ENCODE measurements at regions of chr6 and their contacts with region 1.

Region 1: DNA sequence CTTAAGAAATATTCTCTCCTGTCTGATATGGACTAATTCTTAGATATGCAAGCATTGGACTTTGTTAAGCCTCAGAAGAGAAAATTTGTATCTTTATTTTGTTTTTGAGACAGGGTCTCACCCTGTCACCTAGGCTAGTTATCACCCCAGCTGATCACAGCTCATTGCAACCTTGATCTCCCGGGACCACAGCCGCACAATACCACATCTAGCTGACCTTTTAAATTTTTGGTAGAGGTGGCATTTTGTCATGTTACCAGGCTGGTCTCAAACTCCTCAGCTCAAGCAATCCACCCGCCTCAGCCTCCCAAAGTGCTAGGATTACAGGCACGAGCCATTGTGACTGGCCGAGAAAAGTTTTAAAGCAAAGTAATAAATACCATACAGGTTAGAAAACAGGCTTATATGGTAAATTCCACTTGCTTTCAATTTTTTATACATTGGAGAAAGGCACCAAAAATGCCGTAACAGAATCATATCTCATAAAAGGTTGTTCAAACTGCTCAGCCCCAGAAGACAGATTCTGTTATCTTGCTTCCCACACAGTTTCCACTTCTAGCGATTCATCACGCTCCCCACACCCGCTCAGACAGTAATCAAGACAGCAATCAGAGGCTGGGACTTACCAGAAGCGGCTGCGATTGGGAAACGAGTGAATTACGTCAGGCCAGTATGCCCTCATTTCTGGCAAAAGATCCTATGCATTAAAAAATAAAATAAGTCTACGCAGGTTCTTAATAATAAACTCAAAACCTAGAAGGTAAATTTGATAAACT is 13.8 kb downstream of the RNASET2 start:
- DNase-seq: peak; percentile 55
- H3K4me3 Mint-ChIP-seq: peak overlapping the region; percentile 50
- H3K27ac Mint-ChIP-seq: peak overlapping the region; percentile 90
- H3K4me1 Mint-ChIP-seq: peaks cover 45% of the 10 kb centered on the region
- H3K27me3 Mint-ChIP-seq: no peaks in the 10 kb centered on the region

Region 2: DNA sequence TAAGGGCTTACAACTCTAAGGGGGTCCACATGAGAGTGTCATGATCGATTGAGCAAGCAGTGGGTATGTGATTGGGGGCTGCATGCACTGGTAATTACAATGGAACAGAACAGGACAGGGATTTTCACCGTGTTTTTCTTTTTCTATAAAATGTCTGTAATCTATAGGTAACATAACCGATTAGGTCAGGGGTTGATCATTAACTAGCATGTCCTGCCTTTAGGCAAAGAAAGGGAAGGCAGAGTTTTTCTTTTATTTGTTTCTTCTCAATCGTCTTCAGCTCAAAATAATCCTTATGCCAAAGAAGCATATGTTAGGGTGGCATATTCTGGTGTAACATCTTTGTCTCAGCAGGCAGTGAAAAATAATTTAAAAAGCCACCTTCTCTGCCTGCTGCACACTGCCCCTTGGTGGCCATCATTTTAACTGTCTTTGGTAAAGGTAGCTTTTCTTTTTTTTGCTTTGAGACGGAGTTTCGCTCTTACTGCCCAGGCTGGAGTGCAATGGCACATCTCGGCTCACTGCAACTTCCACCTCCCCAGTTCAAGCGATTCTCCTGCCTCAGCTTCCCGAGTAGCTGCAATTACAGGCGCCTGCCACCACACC is 46.9 kb after region 1 on chr6:
- intact Hi-C with region 1: loop called (anchors 1 kb)
- DNase-seq: peak; percentile 39
- H3K4me3 Mint-ChIP-seq: no peak overlapping the region
- H3K27ac Mint-ChIP-seq: no peak overlapping the region
- H3K4me1 Mint-ChIP-seq: peaks cover 46% of the 10 kb centered on the region
- H3K27me3 Mint-ChIP-seq: peaks cover 1% of the 10 kb centered on the region

Region 3: DNA sequence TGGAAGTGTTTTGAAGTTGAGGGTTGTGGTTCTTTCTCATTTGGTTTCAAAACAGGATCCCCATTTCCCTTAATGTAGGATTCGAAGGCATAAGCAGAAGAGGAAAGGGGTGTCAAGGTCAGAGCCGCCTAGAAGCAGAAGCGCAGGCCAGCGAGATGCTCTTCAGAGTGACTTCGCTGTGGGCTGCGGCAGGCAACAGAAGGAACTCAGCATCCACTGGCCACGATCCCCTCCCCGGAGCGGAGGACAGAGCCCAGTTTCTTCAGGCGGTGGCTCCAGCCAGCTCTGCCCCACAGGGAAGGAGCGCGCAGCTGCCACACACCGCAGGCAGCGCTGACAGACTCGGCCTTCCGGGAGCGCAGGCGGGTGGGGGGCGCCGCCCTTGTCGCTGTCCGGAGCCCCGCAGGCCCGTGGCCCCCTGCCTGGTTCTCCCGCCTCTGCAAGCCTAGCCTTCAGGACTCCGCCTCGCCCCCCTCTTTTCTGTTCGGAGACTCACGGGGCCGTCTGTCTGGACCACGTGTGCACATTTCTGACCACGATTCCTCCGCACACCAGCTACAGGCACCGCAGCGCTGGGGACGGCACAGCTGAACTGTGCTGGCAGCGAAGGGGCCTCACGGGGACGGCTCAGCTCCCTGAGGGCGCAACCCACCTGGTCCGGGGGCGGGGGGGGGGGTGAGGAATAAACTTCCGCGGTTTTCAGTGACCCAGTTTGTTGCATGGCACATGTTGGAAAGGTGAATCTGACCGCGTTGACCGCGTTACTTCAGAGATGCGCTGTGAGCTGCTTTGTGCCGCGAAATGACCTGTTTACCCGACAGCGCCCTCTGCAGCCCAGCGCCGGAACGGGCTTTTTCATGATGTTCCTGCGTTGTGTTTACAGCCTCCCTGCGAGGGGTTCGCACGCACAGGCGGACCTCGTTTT is 408.4 kb after region 1 on chr6:
- intact Hi-C with region 1: no loop called
- DNase-seq: peak; percentile 72
- H3K4me3 Mint-ChIP-seq: peak overlapping the region; percentile 84
- H3K27ac Mint-ChIP-seq: peak overlapping the region; percentile 78
- H3K4me1 Mint-ChIP-seq: peaks cover 24% of the 10 kb centered on the region
- H3K27me3 Mint-ChIP-seq: peaks cover 33% of the 10 kb centered on the region

Measured in activated T-helper 1 cell treated with anti-CD3 and anti-CD28 coated beads, Interleukin-12 subunit alpha, Interleukin-12 subunit beta, Interleukin-2, Interleukin-4 antibody, amounts not matched to agents 30 ng/mL and 10 ng/mL and 1 ng/mL, durations not matched to agents 14 hours and 24 hours and 36 hours (primary cell).